AG04449 (cell line): ENCODE measurements at regions of chr3 and their contacts with region 1.

Region 1: DNA sequence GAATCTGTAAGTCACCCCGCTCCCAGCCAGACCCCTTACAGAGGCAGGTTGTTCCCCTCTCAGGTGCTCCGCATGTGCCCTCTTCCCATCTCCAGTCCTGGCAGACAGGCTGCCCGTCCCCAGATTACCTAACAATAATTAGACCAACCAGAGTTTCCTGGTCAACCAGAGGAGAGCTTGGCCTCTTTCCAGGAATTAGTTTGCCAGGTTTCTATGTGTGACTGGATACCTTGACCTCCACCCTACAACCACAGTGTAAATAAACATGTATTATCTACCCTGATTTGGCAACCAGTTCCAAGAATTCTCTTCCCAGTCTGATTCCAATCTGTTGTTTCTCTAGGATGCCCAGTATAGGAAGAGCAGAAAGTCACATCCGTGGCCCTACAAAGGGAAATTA is 178.0 kb upstream of the UMPS start:
- DNase-seq: no peak
- H3K4me3 ChIP-seq: no peak overlapping the region
- CTCF ChIP-seq: no peak

Region 2: DNA sequence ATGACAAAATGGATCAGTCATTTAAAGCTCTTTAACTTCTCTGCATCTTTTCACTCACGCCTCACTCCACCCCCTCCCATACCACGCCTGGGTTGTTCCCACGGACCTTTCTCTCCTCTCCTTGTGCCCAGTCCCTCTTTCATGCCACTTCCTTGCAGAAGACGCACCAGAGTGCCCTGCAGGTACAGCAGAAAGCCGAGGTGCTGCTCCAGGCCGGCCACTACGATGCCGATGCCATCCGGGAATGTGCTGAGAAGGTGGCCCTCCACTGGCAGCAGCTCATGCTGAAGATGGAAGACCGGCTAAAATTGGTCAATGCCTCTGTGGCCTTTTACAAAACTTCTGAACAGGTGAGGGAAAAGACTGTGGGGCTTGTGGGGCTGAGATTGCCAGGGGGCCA is 118.1 kb before region 1 on chr3:
- CTCF ChIA-PET with region 1: no interaction called
- POLR2A ChIA-PET with region 1: no interaction called
- DNase-seq: no peak
- H3K4me3 ChIP-seq: no peak overlapping the region
- CTCF ChIP-seq: no peak

Region 3: GRCh38 chr3:124486324-124486723 is 65.9 kb before region 1 on chr3:
- CTCF ChIA-PET with region 1: interaction called, 56 read pairs
- POLR2A ChIA-PET with region 1: no interaction called
- DNase-seq: no peak
- H3K4me3 ChIP-seq: no peak overlapping the region
- CTCF ChIP-seq: no peak

Region 4: DNA sequence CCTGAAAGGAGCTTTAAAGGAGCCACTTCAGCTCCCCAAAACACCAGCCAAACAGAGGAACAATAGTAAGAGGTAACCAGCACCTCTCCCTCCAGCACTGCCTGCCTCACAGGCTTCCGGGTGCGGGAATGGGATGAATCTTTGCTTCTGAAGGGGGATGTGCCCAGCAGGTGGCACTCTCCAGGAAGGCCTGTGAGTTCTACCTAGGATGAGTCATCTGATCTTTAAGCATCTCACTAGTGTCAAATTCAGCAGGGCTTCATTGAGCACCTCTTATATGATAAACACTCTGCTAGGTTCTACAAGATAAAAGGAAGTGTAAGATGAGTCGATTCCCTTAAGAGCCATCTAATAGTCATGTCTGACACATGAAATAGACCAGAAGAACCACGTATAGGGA is 59.4 kb before region 1 on chr3:
- CTCF ChIA-PET with region 1: interaction called, 56 read pairs
- POLR2A ChIA-PET with region 1: no interaction called
- DNase-seq: no peak
- H3K4me3 ChIP-seq: no peak overlapping the region
- CTCF ChIP-seq: peak; percentile 23

Region 5: DNA sequence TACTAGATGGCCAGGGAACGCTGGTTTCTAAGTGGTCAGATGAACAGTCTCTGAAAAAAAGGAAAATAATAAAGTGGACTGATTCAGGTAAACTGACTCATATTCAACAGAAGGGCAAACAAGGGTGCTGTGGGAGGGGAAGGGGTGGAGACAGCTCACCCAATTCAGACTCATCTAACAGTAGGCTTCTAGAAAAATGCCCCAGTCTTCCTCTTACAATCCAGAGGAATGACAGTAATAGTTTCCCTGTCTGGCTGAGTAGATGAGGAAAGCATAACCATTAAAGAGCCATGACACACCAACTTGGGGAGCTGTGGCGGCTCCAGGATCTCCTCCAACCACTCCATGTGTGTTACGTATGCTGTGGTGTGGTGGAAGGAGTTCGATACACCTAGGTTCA is 53.3 kb before region 1 on chr3:
- CTCF ChIA-PET with region 1: interaction called, 19 read pairs
- POLR2A ChIA-PET with region 1: no interaction called
- DNase-seq: no peak
- H3K4me3 ChIP-seq: no peak overlapping the region
- CTCF ChIP-seq: no peak

Region 6: GRCh38 chr3:124522082-124522625 is 30.1 kb before region 1 on chr3:
- CTCF ChIA-PET with region 1: interaction called, 13 read pairs
- POLR2A ChIA-PET with region 1: no interaction called
- DNase-seq: no peak
- H3K4me3 ChIP-seq: no peak overlapping the region
- CTCF ChIP-seq: no peak

Region 7: DNA sequence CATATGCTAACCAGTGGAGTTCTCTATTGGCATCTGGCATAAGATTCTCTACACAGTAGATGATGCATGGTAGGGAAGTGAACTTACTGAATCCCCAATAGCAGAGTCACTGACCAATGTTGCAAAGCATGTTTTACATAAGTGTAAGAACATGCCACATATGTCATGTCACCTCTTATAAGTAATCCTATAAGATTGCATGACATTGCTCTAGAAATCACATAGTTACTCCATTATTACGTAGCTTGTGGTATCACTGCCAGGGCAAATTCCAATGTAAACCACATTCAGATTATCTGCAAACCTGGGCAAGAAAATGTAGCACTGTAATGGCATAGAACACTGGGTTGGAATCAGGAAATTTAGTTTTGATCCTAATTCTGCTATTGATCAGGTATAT is 20.2 kb before region 1 on chr3:
- CTCF ChIA-PET with region 1: interaction called, 11 read pairs
- POLR2A ChIA-PET with region 1: no interaction called
- DNase-seq: no peak
- H3K4me3 ChIP-seq: no peak overlapping the region
- CTCF ChIP-seq: no peak

Region 8: DNA sequence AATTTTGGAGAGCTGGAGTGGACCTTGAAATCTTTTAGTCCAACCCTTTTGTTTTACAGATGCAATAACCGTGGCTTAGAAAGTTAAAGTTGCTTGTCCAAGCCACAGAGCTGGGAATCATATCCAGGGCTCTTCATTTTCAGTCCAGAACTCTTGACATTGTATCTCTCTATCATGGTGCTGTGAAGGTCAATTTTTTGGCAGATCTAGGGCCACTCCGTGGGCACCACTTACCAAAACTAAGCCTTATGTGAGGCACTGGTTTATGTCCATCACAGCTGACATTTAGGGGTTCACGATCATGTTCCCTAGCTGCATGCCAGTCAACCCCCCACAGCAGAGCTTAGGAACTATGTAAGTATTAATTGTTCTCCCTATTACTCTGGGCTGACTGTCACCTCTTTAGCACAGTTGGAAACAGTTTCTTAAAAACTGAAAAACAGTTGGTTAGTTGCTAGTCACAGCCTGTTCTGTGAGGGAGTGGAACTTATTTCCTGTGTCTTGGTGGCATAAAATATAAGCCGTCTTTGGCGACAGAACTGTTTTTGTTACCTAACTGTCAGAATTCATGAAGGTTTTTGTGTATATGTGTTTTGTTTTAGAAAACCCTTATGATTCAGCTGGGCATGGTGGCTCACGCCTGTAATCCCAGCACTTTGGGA is 11.6 kb before region 1 on chr3:
- CTCF ChIA-PET with region 1: interaction called, 13 read pairs
- POLR2A ChIA-PET with region 1: no interaction called
- DNase-seq: no peak
- H3K4me3 ChIP-seq: no peak overlapping the region
- CTCF ChIP-seq: no peak